T-cell (primary cell): ENCODE measurements at regions of chr3 and their contacts with region 1.

Region 1: DNA sequence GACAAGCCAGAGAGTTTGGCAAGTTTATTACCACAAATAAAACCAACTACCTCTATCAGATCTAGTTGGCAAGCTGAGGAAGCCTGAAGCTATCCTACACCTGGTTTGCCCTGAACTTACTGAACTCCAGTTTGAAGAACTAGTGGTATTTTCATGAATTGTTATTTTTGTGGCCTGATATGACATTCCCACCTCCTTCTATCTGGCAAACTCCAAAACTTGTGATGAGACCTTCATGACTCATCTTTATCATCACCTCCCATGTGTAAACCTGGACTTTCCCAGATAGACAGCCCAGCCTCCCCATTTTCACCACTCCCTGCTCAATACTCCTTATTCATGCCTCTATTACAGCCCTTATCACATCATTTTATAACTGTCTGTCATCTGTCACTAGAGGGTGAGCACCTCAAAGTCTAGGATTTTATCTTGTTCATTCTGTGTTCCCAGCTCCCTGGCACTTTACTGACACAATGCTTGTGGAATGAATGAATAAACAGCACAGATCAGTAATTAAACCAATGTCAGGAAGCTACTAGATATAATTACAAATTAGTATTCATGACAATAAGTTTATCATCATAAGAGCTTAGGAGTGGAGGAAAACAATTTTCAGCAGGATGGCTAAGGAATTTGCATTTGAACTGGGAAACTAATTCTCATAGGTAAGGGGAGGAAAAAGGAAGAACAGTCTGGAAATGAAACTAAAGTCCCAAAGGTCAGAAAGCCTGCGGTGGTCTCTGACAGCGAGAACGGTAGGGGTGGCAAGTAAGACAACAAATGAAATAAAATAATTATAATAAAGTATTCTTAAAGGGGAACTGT is 13.2 kb upstream of the TRANK1 start:
- DNase-seq: peak in 1 of 35 experiments; percentile 20
- ATAC-seq: no peak
- H3K4me3 ChIP-seq: no peak overlapping the region
- H3K4me3 Mint-ChIP-seq: peak overlapping the region in 1 of 3 donors; percentile 4
- H3K27ac ChIP-seq: no peak overlapping the region
- H3K27ac Mint-ChIP-seq: peak overlapping the region; percentile 40 to 50
- H3K4me1 ChIP-seq: peaks cover 0 to 3% of the 10 kb centered on the region in 2 experiments
- H3K4me1 Mint-ChIP-seq: peaks cover 0 to 12% (median 10%) of the 10 kb centered on the region in 3 donors
- H3K27me3 ChIP-seq: no peaks in the 10 kb centered on the region
- H3K27me3 Mint-ChIP-seq: no peaks in the 10 kb centered on the region

Region 2: DNA sequence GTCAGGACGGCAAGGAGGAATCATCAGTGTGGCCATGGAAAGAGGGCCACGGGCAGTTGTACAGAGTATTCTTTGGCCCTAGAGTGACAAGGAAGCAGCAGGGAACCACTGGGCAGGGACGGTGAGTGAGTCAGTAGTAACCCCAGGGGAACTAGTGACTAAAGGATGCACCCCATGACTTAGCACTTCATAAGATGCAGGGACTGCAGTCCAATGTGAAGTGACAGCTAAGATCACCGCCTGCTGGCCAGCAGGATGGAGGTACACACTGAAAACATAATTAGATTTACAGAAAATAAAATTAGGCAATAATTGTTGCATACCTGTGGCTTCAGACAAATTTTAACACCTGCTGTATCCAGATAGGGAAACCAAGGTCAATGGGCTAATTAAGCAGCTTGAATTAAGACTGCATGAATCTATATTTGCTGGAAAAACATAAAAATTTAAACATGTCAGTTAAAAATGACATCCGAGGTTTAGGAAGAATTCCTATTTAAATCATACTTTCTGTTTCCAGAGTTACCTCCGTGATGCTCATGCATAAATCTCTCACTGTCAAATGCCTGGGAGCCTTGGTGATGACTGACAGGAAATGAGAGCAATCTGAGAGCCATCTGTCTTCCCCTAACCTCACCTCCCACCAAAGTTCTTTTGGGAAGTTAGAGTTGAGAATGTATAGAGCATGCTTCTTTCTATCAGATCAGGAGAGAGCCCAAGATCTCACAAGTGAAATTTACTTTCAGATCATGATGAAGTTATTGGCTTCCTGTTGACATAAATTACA is 250.3 kb before region 1 on chr3:
- CTCF ChIA-PET with region 1: no interaction called
- POLR2A ChIA-PET with region 1: no interaction called
- DNase-seq: no peak
- ATAC-seq: no peak
- H3K4me3 ChIP-seq: no peak overlapping the region
- H3K4me3 Mint-ChIP-seq: no peak overlapping the region
- H3K27ac ChIP-seq: no peak overlapping the region
- H3K27ac Mint-ChIP-seq: no peak overlapping the region
- H3K4me1 ChIP-seq: no peaks in the 10 kb centered on the region
- H3K4me1 Mint-ChIP-seq: peaks cover 0 to 6% (median 0%) of the 10 kb centered on the region in 3 donors
- H3K27me3 ChIP-seq: peaks cover 0 to 13% of the 10 kb centered on the region in 2 experiments
- H3K27me3 Mint-ChIP-seq: peaks cover 3 to 9% of the 10 kb centered on the region in 2 donors

Region 3: GRCh38 chr3:36876181-36876936 is 81.7 kb before region 1 on chr3:
- CTCF ChIA-PET with region 1: interaction called, 3 to 20 read pairs
- POLR2A ChIA-PET with region 1: no interaction called
- DNase-seq: peak in 25 of 35 experiments; percentile 4 to 78 (median 17)
- ATAC-seq: peak; percentile 86 to 92 (median 91)
- H3K4me3 ChIP-seq: peak overlapping the region; percentile 18 to 23
- H3K4me3 Mint-ChIP-seq: peak overlapping the region; percentile 61 to 76 (median 66)
- H3K27ac ChIP-seq: peak overlapping the region; percentile 89
- H3K27ac Mint-ChIP-seq: peak overlapping the region; percentile 94 to 99
- H3K4me1 ChIP-seq: peaks cover 23 to 30% of the 10 kb centered on the region in 2 experiments
- H3K4me1 Mint-ChIP-seq: peaks cover 55 to 65% (median 57%) of the 10 kb centered on the region in 3 donors
- H3K27me3 ChIP-seq: no peaks in the 10 kb centered on the region
- H3K27me3 Mint-ChIP-seq: no peaks in the 10 kb centered on the region

Region 4: DNA sequence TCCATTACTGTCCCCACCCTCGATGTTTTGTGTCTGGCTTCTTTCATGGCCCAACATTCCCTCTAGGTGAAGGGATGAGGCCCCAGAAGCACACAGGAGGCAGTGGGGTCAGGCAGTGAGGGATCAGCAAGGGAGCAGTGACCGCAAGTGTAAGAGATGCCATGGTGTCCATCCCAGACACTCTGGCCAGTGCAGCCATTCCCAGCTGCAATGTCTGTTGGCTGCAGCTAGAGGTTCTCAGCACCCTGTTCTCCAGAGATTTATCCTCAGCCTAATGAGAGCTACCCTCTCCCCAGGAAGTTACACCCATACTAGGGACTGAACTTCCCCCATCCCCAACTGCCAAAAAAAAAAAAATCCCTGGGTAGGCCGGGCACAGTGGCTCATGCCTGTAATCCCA is 53.4 kb before region 1 on chr3:
- CTCF ChIA-PET with region 1: interaction called, 4 to 10 read pairs
- POLR2A ChIA-PET with region 1: interaction called in 1 of 2 experiments, 18 read pairs
- DNase-seq: no peak
- ATAC-seq: no peak
- H3K4me3 ChIP-seq: no peak overlapping the region
- H3K4me3 Mint-ChIP-seq: peak overlapping the region in 2 of 3 donors; percentile 29 to 84
- H3K27ac ChIP-seq: peak overlapping the region; percentile 23
- H3K27ac Mint-ChIP-seq: peak overlapping the region; percentile 63 to 89
- H3K4me1 ChIP-seq: peaks cover 25 to 72% of the 10 kb centered on the region in 2 experiments
- H3K4me1 Mint-ChIP-seq: peaks cover 83 to 86% (median 86%) of the 10 kb centered on the region in 3 donors
- H3K27me3 ChIP-seq: no peaks in the 10 kb centered on the region
- H3K27me3 Mint-ChIP-seq: no peaks in the 10 kb centered on the region

Region 5: DNA sequence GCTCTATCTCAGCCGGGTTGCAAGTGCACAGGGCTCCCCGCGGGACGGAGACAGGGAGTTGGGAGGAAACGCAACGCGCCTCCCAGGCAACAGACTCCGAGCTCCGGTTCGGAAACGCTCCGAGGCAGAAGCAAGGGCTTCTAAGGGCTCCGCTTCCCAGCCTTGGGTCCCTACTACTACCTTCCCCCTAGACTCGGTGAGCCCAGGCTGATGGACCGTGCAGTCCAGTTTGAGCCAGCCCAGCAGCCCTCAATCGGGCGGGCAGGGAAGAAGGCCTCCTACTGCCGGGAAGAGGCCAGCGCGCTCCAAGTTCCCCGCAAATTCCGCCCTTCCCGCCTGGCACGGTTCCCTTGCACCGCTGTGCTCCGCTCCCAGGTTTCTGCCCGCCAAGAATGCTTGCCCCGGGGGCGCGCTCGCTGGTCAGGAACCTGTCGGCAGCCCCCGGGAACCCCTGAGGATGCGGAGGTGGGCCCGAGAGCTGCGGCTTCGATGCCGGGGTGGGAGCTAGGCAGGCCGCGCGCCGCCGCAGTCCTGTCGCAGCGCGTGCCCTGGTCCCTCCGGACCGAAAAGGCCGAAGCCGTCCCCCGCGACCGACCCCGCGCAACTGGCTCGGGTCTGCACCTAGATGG is 13.9 kb before region 1 on chr3:
- CTCF ChIA-PET with region 1: interaction called in 1 of 2 experiments, 34 read pairs
- POLR2A ChIA-PET with region 1: no interaction called
- DNase-seq: peak in 27 of 35 experiments; percentile 2 to 47 (median 14)
- ATAC-seq: peak; percentile 27 to 63 (median 58)
- H3K4me3 ChIP-seq: peak overlapping the region; percentile 84 to 91
- H3K4me3 Mint-ChIP-seq: peak overlapping the region; percentile 77 to 82 (median 81)
- H3K27ac ChIP-seq: no peak overlapping the region
- H3K27ac Mint-ChIP-seq: peak overlapping the region; percentile 19 to 75
- H3K4me1 ChIP-seq: peaks cover 7 to 16% of the 10 kb centered on the region in 2 experiments
- H3K4me1 Mint-ChIP-seq: peaks cover 13 to 26% (median 25%) of the 10 kb centered on the region in 3 donors
- H3K27me3 ChIP-seq: no peaks in the 10 kb centered on the region
- H3K27me3 Mint-ChIP-seq: no peaks in the 10 kb centered on the region